Right ventricle myocardium inferior (tissue), 1 donor: ENCODE measurements at regions of chr10 and their contacts with region 1.

Region 1: GRCh38 chr10:49518982-49519578 is 19.8 kb downstream of the ERCC6 start:
- DNase-seq: no peak
- ATAC-seq: peak; percentile 58

Region 2: GRCh38 chr10:49177391-49178355 is 341.4 kb before region 1 on chr10:
- intact Hi-C with region 1: loop called (anchors 10 kb)
- DNase-seq: no peak
- ATAC-seq: peak; percentile 90

Region 3: DNA sequence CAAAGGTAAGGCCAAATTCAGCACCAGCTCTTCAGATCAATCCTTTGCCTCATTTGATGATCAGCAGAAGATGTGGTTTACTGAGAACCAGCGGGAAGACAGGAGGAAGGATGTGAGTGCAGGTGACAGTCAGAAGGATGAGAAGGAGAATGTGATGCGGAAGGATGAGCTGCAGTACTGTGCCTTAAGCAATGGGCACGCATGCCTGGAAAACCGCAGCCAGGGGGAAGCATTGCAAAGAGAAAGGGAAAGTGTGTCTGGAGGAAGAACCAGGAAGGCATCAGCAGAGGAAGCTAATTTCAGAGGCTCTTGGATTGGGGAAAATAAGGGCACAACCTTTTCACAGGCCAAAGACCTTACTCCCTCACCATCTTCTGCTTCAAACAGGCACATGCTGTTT is 194.4 kb before region 1 on chr10:
- intact Hi-C with region 1: loop called (anchors 5 kb)
- DNase-seq: no peak
- ATAC-seq: no peak

Region 4: GRCh38 chr10:49407552-49408137 is 111.4 kb before region 1 on chr10:
- intact Hi-C with region 1: loop called (anchors 1 kb)
- DNase-seq: peak; percentile 81
- ATAC-seq: peak; percentile 61